Activated CD4-positive, alpha-beta memory T cell treated with anti-CD3 and anti-CD28 coated beads for 36 hours (primary cell): ENCODE measurements at regions of chr22 and their contacts with region 1.

Region 1: GRCh38 chr22:43884600-43885325 is 7.0 kb downstream of the PNPLA5 start:
- DNase-seq: peak; percentile 59
- H3K4me3 Mint-ChIP-seq: no peak overlapping the region
- H3K27ac Mint-ChIP-seq: no peak overlapping the region
- H3K4me1 Mint-ChIP-seq: no peaks in the 10 kb centered on the region
- H3K27me3 Mint-ChIP-seq: peaks cover 29% of the 10 kb centered on the region

Region 2: DNA sequence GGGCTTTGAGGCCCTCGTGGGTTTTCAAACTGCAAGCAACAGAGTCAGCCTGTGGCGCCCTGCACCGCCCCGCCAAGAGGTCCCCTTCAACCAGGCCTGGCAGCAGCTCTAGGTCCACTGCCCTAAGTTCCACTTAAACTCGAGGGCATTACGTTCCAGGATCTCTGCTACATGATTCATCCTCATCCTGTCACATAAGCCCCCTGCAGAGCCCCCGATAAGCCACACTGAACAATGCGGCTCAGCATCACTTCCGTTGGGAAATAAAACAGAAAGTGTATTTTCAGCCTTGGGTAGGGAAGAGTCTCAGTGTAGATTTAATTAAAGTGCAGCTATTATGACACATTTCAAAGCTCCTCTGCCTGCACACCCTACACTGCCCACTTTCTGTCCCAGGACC is 47.1 kb before region 1 on chr22:
- CTCF ChIA-PET with region 1: no interaction called
- POLR2A ChIA-PET with region 1: no interaction called
- intact Hi-C with region 1: no loop called
- DNase-seq: no peak
- H3K4me3 Mint-ChIP-seq: no peak overlapping the region
- H3K27ac Mint-ChIP-seq: no peak overlapping the region
- H3K4me1 Mint-ChIP-seq: no peaks in the 10 kb centered on the region
- H3K27me3 Mint-ChIP-seq: peaks cover 12% of the 10 kb centered on the region

Region 3: DNA sequence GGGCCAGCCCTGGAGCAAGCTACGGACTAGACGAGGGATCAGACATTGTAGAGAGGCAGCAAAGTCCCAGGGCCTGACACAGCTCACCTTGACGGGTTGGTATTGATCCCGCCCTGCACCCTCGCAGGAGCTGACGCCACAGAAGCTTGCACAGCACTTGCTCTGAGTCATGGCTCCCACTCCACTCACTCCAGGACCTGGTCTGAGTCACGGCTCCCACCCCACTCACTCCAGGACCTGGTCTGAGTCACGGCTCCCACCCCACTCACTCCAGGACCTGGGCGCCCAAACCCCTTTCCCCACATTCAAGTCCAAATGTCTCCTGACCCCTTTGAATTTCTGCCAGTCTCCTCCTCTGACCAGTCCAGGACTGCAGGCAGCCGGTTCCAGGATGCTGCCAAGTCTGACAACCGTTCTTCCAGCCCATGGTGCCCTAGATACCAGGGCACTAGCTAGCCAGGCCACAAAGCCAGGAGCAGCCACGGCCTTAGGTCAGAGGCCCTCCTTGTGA is 13.0 kb after region 1 on chr22:
- CTCF ChIA-PET with region 1: interaction called, 14 read pairs
- POLR2A ChIA-PET with region 1: no interaction called
- intact Hi-C with region 1: no loop called
- DNase-seq: peak; percentile 55
- H3K4me3 Mint-ChIP-seq: no peak overlapping the region
- H3K27ac Mint-ChIP-seq: no peak overlapping the region
- H3K4me1 Mint-ChIP-seq: no peaks in the 10 kb centered on the region
- H3K27me3 Mint-ChIP-seq: peaks cover 11% of the 10 kb centered on the region

Region 4: GRCh38 chr22:43945632-43946383 is 61.0 kb after region 1 on chr22:
- CTCF ChIA-PET with region 1: interaction called, 39 read pairs
- POLR2A ChIA-PET with region 1: no interaction called
- intact Hi-C with region 1: loop called (anchors 1 kb)
- DNase-seq: peak; percentile 80
- H3K4me3 Mint-ChIP-seq: no peak overlapping the region
- H3K27ac Mint-ChIP-seq: no peak overlapping the region
- H3K4me1 Mint-ChIP-seq: no peaks in the 10 kb centered on the region
- H3K27me3 Mint-ChIP-seq: peaks cover 4% of the 10 kb centered on the region